Activated CD4-positive, alpha-beta T cell treated with anti-CD3 and anti-CD28 coated beads, Interleukin-2, amount 10 ng/mL, durations not matched to agents 24 days and 14 days (primary cell): ENCODE measurements at regions of chr2 and their contacts with region 1.

Region 1: GRCh38 chr2:196840171-196840570 is 31.0 kb upstream of the C2orf66 start:
- DNase-seq: no peak
- H3K4me3 Mint-ChIP-seq: no peak overlapping the region
- H3K27ac Mint-ChIP-seq: no peak overlapping the region
- H3K4me1 Mint-ChIP-seq: no peaks in the 10 kb centered on the region
- H3K27me3 Mint-ChIP-seq: no peaks in the 10 kb centered on the region

Region 2: DNA sequence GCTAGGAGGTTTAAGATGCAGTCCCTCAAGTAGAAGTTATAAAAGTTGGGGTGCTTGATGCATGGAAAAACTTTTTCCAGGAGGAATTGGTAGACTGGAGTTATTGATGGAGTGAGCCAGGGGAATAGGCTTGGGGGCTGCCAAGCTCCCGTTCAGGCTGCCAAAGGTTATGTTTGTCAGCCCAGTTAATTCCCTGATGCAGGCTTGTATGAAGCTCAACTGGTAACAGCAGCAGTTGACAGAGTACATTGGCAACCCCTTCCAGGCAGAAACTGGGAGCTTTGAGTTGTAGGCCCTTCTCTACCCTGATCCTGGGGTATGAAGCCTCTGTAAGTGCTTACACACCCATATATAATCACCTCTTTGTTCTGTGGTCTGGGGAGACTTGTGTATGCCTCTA is 184.4 kb before region 1 on chr2:
- intact Hi-C with region 1: no loop called
- DNase-seq: no peak
- H3K4me3 Mint-ChIP-seq: no peak overlapping the region
- H3K27ac Mint-ChIP-seq: no peak overlapping the region
- H3K4me1 Mint-ChIP-seq: no peaks in the 10 kb centered on the region
- H3K27me3 Mint-ChIP-seq: no peaks in the 10 kb centered on the region

Region 3: DNA sequence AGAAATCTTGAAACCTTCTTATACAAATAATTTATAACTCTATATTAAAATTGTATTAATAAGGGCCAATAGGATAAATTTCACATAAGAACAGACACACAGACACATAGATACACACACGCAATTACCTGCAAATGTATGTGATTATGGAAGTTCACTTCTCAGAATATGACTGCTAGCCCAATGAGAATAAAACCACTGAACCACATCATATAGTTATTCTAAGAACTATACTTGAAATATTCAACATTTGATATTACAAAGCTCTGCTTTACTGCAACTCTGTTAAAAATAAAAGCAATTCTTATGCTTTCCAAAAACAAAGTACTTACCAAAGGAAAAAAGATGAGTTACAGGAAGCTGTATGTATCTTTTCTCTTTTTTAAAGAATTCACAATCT is 35.2 kb after region 1 on chr2:
- intact Hi-C with region 1: loop called (anchors 5 kb)
- DNase-seq: no peak
- H3K4me3 Mint-ChIP-seq: no peak overlapping the region
- H3K27ac Mint-ChIP-seq: no peak overlapping the region
- H3K4me1 Mint-ChIP-seq: peaks cover 24% of the 10 kb centered on the region
- H3K27me3 Mint-ChIP-seq: no peaks in the 10 kb centered on the region

Region 4: GRCh38 chr2:197113275-197113711 is 273.1 kb after region 1 on chr2:
- intact Hi-C with region 1: no loop called
- DNase-seq: no peak
- H3K4me3 Mint-ChIP-seq: no peak overlapping the region
- H3K27ac Mint-ChIP-seq: no peak overlapping the region
- H3K4me1 Mint-ChIP-seq: peaks cover 18% of the 10 kb centered on the region
- H3K27me3 Mint-ChIP-seq: no peaks in the 10 kb centered on the region